Heart right ventricle (tissue), 16 donors: ENCODE measurements at regions of chr17 and their contacts with region 1.

Region 1: GRCh38 chr17:68600067-68600930 is 868 bp downstream of the FAM20A start:
- DNase-seq: peak; percentile 24 to 55
- ATAC-seq: peak; percentile 35 to 85 (median 53)
- H3K4me3 ChIP-seq: peak overlapping the region; percentile 51 to 84 (median 70)
- H3K27ac ChIP-seq: peak overlapping the region; percentile 50 to 96 (median 75)
- H3K4me1 ChIP-seq: peaks cover 0 to 70% (median 18%) of the 10 kb centered on the region in 9 donors
- H3K27me3 ChIP-seq: peaks cover 0 to 41% (median 0%) of the 10 kb centered on the region in 7 donors
- CTCF ChIP-seq: peak in 7 of 9 donors; percentile 11 to 61 (median 35)

Region 2: GRCh38 chr17:68533887-68534694 is 66.2 kb before region 1 on chr17:
- intact Hi-C with region 1: loop called in 2 of 10 experiments (anchors 5 to 10 kb)
- DNase-seq: no peak
- ATAC-seq: no peak
- H3K4me3 ChIP-seq: no peak overlapping the region
- H3K27ac ChIP-seq: peak overlapping the region in 5 of 10 donors; percentile 11 to 59 (median 23)
- H3K4me1 ChIP-seq: peaks cover 0 to 70% (median 11%) of the 10 kb centered on the region in 9 donors
- H3K27me3 ChIP-seq: no peaks in the 10 kb centered on the region
- CTCF ChIP-seq: peak in 7 of 9 donors; percentile 6 to 47 (median 43)

Region 3: DNA sequence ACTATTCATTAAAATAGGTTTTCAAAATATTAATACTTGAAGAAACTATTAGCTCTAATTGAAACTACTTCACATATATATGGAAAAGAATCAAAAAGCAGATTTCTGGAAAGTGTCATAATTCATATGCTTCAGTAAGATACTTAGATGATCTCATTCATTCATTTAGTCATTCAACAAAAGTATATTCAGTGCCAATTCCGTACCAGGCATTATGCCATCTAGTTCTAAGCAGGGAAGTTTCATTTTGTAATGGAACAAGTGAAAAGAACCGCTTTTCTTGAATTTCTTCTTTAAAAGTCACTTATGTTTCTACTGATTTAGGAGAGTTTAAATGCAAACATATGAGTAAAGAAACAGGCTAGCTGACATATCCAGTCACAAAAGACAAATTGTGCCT is 119.1 kb after region 1 on chr17:
- intact Hi-C with region 1: no loop called
- DNase-seq: no peak
- ATAC-seq: no peak
- H3K4me3 ChIP-seq: no peak overlapping the region
- H3K27ac ChIP-seq: no peak overlapping the region
- H3K4me1 ChIP-seq: no peaks in the 10 kb centered on the region
- H3K27me3 ChIP-seq: no peaks in the 10 kb centered on the region
- CTCF ChIP-seq: no peak

Region 4: DNA sequence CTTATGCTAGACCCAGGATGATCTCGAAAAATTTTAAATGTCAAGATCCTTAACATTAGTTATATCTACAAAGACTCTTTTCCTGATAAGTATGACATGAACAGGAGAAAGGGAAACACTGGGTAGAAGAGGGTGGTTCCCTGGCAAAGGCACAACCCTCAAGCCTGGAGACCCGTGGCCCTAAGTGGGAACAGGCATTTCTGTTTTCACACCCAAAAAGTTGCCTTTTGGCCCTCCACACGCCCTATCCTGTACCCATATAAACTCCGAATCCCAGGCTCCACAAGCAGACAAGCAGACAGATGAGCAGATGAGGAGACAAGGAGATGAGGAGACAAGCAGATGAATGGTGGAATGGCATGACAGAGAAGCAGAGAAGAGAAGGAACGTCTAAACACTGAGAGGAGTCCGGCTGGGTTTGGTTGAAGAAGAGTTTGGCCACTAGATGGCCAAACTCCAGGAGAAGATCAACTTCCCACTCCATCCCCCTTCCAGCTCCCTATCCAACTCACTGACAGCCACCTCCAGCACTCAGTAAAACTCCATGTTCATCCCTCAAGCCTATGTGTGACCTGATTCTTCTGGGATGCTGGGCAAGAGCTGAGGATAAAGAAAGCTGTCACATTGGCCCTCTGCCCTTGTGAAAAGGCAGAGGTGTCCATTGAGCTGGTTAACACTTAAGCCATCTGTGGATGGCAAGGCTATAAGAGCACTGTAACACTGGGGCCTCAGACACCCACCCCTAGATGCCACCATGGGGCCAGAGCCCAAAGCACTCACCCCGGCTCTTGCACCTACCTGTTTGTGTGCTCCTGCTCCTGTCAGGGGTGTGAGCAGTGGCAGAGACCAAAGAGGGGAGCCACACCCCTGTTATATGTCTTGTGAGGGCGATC is 140.5 kb after region 1 on chr17:
- intact Hi-C with region 1: loop called in 1 of 10 experiments (anchors 10 kb)
- DNase-seq: no peak
- ATAC-seq: no peak
- H3K4me3 ChIP-seq: no peak overlapping the region
- H3K27ac ChIP-seq: no peak overlapping the region
- H3K4me1 ChIP-seq: peaks cover 0 to 15% (median 10%) of the 10 kb centered on the region in 9 donors
- H3K27me3 ChIP-seq: no peaks in the 10 kb centered on the region
- CTCF ChIP-seq: no peak

Region 5: DNA sequence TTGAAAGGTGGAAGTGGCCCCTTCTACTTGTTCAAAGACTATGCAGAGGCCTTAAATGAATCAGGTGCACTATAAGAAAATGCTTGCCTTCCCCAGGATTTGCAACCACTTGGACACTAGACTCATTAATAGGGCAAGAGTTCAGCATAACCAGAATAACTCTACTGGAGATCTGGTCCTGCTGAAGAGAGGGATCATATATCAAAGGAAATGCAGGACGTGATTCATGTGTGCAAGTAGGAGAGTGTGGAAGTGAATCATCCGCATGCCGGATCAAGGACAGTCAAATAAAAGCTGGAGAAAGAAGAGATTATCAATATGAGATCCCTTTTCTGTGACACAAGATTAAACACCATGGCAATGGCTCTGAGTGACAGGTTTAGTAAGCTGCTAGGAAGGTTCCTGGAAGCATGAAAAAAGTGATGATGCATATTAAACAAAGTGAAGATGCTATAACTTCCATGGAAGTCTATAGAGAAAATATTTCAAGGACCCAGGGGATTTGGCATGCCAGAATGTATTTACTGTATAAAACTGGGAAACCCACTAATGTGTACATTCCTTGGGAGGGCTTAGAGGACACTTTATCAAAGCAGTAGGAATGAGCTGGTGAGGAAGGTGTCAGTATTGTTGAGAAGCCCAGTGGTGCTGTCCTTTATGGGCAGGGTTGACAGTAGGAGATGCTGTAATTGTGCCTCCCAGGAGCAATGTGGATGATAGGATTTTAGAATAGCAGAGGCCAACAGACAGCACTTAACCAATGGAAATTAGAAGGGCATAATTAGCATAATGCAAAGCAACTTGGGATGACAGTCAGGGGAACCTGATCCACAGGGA is 221.8 kb after region 1 on chr17:
- intact Hi-C with region 1: no loop called
- DNase-seq: no peak
- ATAC-seq: peak in 1 of 8 donors; percentile 80
- H3K4me3 ChIP-seq: no peak overlapping the region
- H3K27ac ChIP-seq: peak overlapping the region in 4 of 10 donors; percentile 15 to 77 (median 34)
- H3K4me1 ChIP-seq: peaks cover 0 to 18% (median 3%) of the 10 kb centered on the region in 9 donors
- H3K27me3 ChIP-seq: no peaks in the 10 kb centered on the region
- CTCF ChIP-seq: no peak